H1 (cell line): ENCODE measurements at regions of chr19 and their contacts with region 1.

Region 1: DNA sequence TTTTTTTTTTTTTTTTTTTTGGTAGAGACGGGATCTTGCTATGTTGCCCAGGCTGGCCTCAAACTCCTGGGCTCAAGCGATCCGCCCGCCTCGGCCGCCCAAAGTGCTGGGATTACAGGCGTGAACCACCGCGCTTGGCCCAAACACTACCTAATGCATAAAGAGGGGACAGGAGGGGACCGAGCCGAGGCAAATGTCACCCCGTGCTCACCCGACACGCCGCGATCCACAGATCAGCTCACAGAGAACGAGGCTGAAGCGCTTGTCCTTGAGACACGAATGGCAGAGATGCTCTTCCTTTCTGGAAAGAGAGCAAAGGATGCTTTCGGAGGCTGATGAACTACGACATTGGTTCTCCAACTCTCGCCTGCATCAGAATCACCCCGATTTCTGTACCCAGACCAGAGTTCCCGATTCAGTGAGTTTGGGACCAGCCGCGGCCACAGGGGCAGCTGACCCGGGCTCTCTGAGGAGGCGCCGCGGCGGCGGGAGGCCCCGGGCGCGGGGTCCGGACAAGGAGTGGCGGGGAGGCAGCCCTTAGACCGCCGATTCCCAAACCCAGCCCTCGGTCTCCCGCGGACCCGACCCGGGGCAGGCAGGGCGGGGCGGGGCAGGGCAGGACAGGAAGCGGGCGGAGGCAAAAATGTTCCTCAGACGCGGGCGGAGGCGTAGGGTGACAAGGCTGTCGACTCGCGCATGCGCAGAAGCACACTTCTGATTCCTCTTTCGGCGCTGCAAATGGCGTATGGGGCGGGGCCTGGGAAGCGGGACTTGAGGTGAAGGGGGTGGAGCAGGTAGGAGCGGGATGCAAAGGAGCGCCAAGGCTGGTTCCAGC is at the start of gene ZNF699:
- DNase-seq: peak; percentile 94 to 97
- H3K4me3 ChIP-seq: peak within 1 kb of the TSS; percentile 75 to 92 (median 78)
- H3K27ac ChIP-seq: peak within 1 kb of the TSS; percentile 82
- H3K4me1 ChIP-seq: peaks cover 0 to 3% (median 0%) of the 10 kb centered on the region in 4 experiments; a peak in 1 of 7 replicates
- H3K27me3 ChIP-seq: no peaks in the 10 kb centered on the region
- CTCF ChIP-seq: no peak
- EP300 ChIP-seq: no peak
- POLR2A ChIP-seq: peak in 1 of 2 experiments; percentile 63; a peak in 2 of 3 replicates
- RAD21 ChIP-seq: no peak
- total RNA-seq, gene ZNF699: 3.3 and 3.7 TPM in 2 replicates

Region 2: DNA sequence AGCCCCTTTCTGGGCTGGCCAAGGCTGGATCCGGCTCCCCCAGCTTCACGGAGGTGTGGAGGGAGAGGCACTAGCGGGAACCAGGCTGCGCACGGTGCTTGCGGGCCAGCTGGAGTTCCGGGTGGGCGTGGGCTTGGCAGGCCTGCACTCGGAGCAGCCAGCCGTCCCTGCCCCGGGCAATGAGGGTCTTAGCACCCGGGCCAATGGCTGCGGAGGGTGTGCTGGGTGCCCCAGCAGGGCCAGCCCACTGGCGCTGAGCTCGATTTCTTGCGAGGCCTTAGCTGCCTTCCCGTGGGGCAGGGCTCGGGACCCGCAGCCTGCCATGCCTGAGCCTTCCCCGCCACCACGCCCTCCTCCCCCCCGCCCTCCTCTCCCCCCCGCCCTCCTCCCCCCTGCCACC is 12.0 kb after region 1 on chr19:
- CTCF ChIA-PET with region 1: interaction called, 11 read pairs
- POLR2A ChIA-PET with region 1: interaction called, 5 read pairs
- DNase-seq: no peak
- H3K4me3 ChIP-seq: no peak overlapping the region
- H3K27ac ChIP-seq: no peak overlapping the region
- H3K4me1 ChIP-seq: no peaks in the 10 kb centered on the region; a peak in 2 of 7 replicates
- H3K27me3 ChIP-seq: no peaks in the 10 kb centered on the region
- CTCF ChIP-seq: no peak
- EP300 ChIP-seq: no peak
- POLR2A ChIP-seq: no peak
- RAD21 ChIP-seq: no peak

Region 3: GRCh38 chr19:9354651-9355050 is 45.3 kb after region 1 on chr19:
- CTCF ChIA-PET with region 1: no interaction called
- POLR2A ChIA-PET with region 1: no interaction called
- DNase-seq: no peak
- H3K4me3 ChIP-seq: no peak overlapping the region
- H3K27ac ChIP-seq: no peak overlapping the region
- H3K4me1 ChIP-seq: no peaks in the 10 kb centered on the region
- H3K27me3 ChIP-seq: no peaks in the 10 kb centered on the region
- CTCF ChIP-seq: no peak
- EP300 ChIP-seq: no peak
- POLR2A ChIP-seq: no peak
- RAD21 ChIP-seq: no peak

Region 4: DNA sequence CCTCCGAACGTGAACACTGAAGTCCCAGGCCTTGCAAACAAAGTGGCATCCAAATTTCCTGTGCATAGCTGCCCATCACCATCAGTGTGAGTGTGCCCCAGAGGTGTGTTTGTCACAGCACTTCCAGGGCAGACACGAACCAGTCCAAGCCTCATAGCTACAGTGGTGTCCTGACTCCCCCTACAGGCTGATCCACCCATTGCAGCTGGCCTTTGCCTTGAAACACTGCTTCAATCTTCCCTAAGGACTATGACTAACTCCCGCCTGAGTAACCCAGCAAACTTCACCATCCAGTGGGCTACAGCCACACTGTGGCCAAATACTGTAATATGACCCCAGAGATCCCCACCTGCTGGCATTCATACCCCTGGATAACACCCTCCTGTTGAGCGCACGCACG is 122.1 kb after region 1 on chr19:
- CTCF ChIA-PET with region 1: interaction called, 11 read pairs
- POLR2A ChIA-PET with region 1: no interaction called
- DNase-seq: peak; percentile 80 to 85
- H3K4me3 ChIP-seq: no peak overlapping the region
- H3K27ac ChIP-seq: no peak overlapping the region
- H3K4me1 ChIP-seq: no peaks in the 10 kb centered on the region; a peak in 2 of 7 replicates
- H3K27me3 ChIP-seq: no peaks in the 10 kb centered on the region
- CTCF ChIP-seq: peak; percentile 73 to 93 (median 89)
- EP300 ChIP-seq: no peak
- POLR2A ChIP-seq: no peak
- RAD21 ChIP-seq: peak; percentile 84 to 87

Region 5: GRCh38 chr19:9566729-9567128 is 257.4 kb after region 1 on chr19:
- CTCF ChIA-PET with region 1: no interaction called
- POLR2A ChIA-PET with region 1: no interaction called
- DNase-seq: no peak
- H3K4me3 ChIP-seq: peak overlapping the region in 1 of 4 experiments; percentile 36; a peak in 1 of 8 replicates
- H3K27ac ChIP-seq: no peak overlapping the region
- H3K4me1 ChIP-seq: no peaks in the 10 kb centered on the region
- H3K27me3 ChIP-seq: no peaks in the 10 kb centered on the region
- CTCF ChIP-seq: peak in 1 of 3 experiments; percentile 41; a peak in 1 of 4 replicates
- EP300 ChIP-seq: no peak
- POLR2A ChIP-seq: no peak
- RAD21 ChIP-seq: no peak